Activated CD4-positive, alpha-beta memory T cell treated with anti-CD3 and anti-CD28 coated beads for 36 hours (primary cell): ENCODE measurements at regions of chr1 and their contacts with region 1.

Region 1: GRCh38 chr1:224329842-224330753 is at the start of gene NVL:
- DNase-seq: peak; percentile 88
- H3K4me3 Mint-ChIP-seq: peak within 1 kb of the TSS; percentile 94
- H3K27ac Mint-ChIP-seq: peak within 1 kb of the TSS; percentile 97
- H3K4me1 Mint-ChIP-seq: peaks cover 42% of the 10 kb centered on the region
- H3K27me3 Mint-ChIP-seq: no peaks in the 10 kb centered on the region
- total RNA-seq, gene NVL: 32.5 to 38.0 TPM

Region 2: DNA sequence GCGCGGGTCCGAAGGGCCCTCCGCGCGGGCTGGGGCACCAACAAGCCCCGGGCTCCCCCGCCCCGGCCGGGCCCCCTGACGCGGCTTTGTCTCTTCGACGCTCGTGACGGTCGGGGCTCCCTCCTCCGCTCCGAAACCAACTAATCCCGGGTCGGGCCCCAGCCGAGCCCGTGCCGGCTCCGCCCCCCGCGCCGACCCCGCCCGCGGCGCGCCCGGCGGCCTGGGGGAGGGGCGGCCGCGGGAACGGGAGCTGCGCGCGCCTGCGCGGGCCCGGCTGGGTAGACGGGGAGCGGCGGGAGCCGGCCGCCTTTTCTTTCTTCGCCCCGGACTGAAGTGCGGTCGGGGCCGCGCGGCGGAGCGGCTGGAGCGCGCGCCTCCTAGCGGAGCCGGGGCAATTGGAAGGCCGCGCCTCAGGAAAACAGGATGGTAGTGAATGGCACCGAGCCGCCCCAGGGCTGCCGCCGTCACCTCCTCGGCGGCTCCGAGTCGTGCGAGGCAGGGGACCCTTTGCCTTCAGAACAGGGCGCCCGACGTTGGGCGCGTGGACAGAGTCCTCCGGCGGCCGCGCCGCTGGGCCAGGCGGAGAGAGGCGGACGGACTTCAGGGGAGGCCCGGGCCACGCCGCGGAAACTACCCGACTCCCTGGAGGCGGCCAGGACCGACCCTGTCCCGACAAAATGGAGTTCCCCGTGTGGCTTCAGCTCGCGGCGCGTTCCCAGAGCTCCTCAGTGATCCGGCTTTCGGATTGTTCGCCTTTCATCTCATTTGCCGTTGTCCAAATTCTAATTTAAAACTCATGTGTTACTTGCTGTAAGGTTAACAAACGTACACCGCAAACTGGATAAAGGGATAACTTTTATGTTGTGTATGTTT is 484.1 kb before region 1 on chr1 and contains the start of gene TP53BP2:
- CTCF ChIA-PET with region 1: no interaction called
- POLR2A ChIA-PET with region 1: no interaction called
- intact Hi-C with region 1: loop called (anchors 5 kb)
- DNase-seq: peak; percentile 88
- H3K4me3 Mint-ChIP-seq: peak within 1 kb of the TSS; percentile 98
- H3K27ac Mint-ChIP-seq: peak within 1 kb of the TSS; percentile 100
- H3K4me1 Mint-ChIP-seq: peaks cover 45% of the 10 kb centered on the region
- H3K27me3 Mint-ChIP-seq: no peaks in the 10 kb centered on the region
- total RNA-seq, gene TP53BP2: 56.0 to 58.7 TPM

Region 3: DNA sequence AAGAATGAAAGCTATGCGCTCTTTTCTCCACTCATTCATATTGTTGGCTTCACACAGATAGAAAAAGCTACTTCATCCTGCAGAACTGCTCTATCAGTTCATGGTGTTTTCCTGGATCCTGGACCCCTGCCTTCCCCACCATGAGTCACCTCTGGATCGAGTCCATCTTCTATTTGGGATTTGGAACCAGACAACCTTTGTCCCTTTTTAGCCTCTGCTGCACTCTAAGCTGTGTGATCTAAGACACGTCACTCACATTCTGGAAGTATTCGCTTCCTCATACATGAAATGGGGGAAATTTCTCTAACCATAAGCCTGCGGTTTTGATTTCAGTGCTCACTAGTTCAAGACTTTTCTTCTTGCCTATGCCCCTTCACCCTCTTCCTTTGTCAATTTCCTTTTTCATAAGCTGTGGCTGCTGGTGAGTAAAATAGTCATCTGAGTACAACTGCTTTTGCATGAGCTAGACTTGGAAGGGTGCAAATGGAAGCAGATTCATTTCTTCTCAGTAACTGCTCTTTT is 161.2 kb before region 1 on chr1:
- CTCF ChIA-PET with region 1: interaction called, 5 read pairs
- POLR2A ChIA-PET with region 1: interaction called, 5 read pairs
- intact Hi-C with region 1: loop called (anchors 5 kb)
- DNase-seq: peak; percentile 22
- H3K4me3 Mint-ChIP-seq: peak overlapping the region; percentile 17
- H3K27ac Mint-ChIP-seq: peak overlapping the region; percentile 50
- H3K4me1 Mint-ChIP-seq: peaks cover 30% of the 10 kb centered on the region
- H3K27me3 Mint-ChIP-seq: no peaks in the 10 kb centered on the region

Region 4: DNA sequence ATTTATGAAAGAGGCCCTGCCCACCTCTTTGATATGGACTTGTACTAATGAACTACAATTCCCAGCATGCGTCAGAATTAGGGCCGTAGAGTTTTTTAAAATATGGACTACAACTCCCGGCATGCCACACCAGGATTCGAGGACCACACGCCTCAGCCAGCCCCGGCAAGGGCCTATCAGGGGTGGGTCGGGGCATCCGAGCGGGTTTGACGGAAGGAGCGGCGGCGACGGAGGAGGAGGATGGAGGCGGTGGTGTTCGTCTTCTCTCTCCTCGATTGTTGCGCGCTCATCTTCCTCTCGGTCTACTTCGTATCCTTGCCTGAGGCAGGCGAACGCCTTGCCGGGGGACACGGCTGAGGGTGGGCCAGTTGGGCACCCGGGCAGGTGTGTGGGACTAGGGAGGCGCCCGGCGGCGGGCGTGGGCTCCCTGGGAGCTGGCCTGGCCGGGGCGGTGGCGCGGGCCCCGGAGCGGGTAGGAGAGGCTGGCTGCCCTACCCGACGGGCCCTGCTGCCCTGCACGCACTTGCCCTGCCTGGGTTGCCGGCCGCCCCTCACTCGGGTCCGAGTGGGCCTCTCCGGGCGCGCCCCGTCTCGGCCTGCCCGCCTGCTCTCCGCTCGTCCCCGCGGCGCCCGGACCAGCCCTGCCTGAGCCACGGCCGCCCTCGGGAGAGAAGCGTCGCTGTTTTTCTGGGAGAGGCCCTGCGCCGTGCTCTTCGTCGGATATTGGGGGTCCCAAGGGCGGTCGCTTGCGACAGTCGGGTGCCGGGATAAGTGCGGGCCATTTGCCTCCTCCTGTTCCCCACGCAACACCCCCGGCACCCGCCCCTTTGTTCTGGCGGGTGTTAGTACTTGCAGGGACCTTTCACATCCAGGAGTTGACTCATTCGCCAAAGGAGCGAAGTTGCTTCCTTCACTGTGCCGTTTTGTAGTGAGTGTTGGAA is 26.9 kb after region 1 on chr1 and contains the start of gene CNIH4:
- CTCF ChIA-PET with region 1: interaction called, 10 read pairs
- POLR2A ChIA-PET with region 1: interaction called, 3 read pairs
- intact Hi-C with region 1: loop called (anchors 1 kb)
- DNase-seq: peak; percentile 94
- H3K4me3 Mint-ChIP-seq: peak within 1 kb of the TSS; percentile 90
- H3K27ac Mint-ChIP-seq: peak within 1 kb of the TSS; percentile 88
- H3K4me1 Mint-ChIP-seq: peaks cover 27% of the 10 kb centered on the region
- H3K27me3 Mint-ChIP-seq: no peaks in the 10 kb centered on the region
- total RNA-seq, gene CNIH4: 48.3 to 51.6 TPM

Region 5: GRCh38 chr1:224458996-224459395 is 128.9 kb after region 1 on chr1:
- CTCF ChIA-PET with region 1: interaction called, 13 read pairs
- POLR2A ChIA-PET with region 1: interaction called, 6 read pairs
- intact Hi-C with region 1: loop called (anchors 2 kb)
- DNase-seq: no peak
- H3K4me3 Mint-ChIP-seq: no peak overlapping the region
- H3K27ac Mint-ChIP-seq: no peak overlapping the region
- H3K4me1 Mint-ChIP-seq: peaks cover 12% of the 10 kb centered on the region
- H3K27me3 Mint-ChIP-seq: no peaks in the 10 kb centered on the region

Region 6: DNA sequence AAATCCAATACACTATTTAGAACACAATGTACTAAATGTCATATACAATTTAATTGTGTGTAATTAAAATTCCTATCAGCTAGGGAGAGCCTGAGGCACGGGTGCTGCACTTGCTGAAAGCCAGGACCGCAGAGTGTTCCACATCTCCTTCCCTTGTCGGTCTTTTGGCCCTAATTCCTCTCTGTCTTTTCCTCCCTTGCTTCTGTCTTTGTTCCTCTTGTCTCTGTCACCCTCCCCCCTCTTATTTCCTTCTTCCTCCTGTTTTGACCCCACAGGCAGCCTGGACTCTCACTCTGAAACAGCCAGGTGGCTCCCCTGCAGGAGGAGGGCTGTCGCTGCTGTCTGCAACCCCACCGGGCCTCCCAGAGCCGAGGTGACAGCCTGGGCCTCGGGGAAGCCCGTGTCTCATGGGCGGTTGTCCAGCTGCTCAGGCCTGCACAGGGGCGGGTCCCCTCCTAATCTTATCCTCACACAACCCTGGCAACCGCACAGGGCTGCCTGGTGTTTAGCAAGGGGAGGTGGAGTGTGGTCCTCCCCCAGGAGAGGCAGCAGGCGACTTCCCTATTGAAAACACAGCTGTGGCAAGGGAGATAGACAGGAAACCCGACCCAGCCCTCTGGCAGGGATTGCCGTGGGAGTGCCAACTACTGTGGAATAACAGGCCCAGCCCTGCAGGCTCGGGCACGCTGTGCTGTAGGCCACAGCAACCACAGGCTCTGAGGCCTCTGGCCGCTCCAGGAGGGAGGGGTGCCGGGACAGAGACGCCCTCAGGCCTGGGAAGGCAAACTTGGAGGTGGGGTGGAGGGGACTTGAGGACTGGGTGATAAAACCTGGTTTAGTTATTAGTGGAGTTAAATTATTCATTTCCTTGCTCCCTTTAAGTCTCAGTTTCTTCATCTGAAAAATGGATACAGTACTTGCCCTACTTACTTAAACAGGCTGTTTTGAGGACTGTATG is 173.3 kb after region 1 on chr1:
- CTCF ChIA-PET with region 1: no interaction called
- POLR2A ChIA-PET with region 1: no interaction called
- intact Hi-C with region 1: no loop called
- DNase-seq: peak; percentile 23
- H3K4me3 Mint-ChIP-seq: no peak overlapping the region
- H3K27ac Mint-ChIP-seq: no peak overlapping the region
- H3K4me1 Mint-ChIP-seq: peaks cover 27% of the 10 kb centered on the region
- H3K27me3 Mint-ChIP-seq: no peaks in the 10 kb centered on the region